ENCODE measurements at regions of chr9 and their contacts with region 1.

Region 1: DNA sequence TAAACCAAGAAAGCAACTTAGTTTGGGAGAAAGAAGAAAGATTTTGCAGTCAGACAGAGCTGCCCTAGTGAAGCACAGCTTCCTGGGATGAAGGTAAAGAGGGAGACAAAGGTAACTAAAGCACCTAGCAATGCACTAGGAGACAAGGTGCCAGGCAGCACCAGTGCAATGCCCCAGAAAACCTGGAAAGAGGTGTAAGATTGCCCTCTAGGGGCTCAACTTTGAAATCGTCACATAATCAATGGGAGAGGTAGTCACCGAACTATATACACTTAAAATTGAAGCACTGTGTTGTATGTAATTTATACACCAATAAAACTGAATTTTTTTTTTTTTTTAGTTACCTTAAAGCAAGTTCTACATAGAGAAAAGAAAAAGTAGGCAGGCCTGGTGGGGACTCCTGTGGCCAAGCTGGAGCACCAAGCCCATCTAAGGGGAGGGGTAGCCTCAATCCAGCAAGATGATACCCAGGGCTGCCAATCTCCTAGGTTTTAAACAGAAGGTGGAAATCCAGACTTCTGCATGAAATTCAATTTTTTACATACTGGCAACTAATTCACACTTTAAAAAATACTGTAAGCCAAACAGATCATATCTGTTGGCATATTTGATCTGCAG is 48.2 kb downstream of the CDK5RAP2 start:
- DNase-seq: peak in 2 of 3 donors; percentile 39 to 50
- H3K4me3 ChIP-seq: no peak overlapping the region
- H3K27ac ChIP-seq: no peak overlapping the region
- H3K4me1 ChIP-seq: no peaks in the 10 kb centered on the region
- H3K27me3 ChIP-seq: no peaks in the 10 kb centered on the region

Region 2: GRCh38 chr9:120542701-120543490 is 11.1 kb after region 1 on chr9:
- CTCF ChIA-PET with region 1: interaction called, 16 read pairs
- POLR2A ChIA-PET with region 1: no interaction called
- DNase-seq: no peak
- H3K4me3 ChIP-seq: no peak overlapping the region
- H3K27ac ChIP-seq: no peak overlapping the region
- H3K4me1 ChIP-seq: no peaks in the 10 kb centered on the region
- H3K27me3 ChIP-seq: no peaks in the 10 kb centered on the region

Region 3: DNA sequence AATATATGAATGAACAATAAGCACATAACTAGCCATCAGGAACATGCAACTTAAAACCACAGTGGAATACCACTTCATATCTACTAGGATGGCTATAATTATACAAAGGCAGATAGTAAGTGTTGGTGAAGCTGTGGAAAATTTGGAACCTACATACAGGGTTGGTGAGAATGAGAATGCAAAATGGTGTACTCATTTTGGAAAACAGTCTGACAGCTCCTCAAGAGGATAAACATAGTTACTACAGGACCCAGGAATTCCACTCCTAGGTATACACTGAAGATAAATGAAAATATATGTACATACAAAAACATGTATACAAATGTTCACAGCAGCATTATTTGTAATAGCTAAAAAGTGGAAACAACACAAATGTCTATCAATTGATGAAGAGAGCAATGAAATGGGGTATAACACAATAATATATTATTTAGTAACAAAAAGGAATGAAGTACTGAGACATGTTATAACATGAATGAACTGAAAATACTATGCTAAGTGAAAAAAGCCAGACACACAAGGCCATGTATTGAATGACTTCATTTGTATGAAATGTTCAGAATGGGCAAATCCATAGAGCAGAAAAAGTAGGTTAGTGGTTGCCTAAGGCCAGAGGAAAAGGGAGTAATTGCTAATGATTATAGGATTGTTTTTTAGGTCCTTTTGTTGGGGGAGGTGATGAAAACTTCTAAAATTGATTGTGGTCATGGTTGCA is 79.3 kb after region 1 on chr9:
- CTCF ChIA-PET with region 1: interaction called, 11 read pairs
- POLR2A ChIA-PET with region 1: no interaction called
- DNase-seq: peak; percentile 21 to 48 (median 34)
- H3K4me3 ChIP-seq: no peak overlapping the region
- H3K27ac ChIP-seq: no peak overlapping the region
- H3K4me1 ChIP-seq: no peaks in the 10 kb centered on the region
- H3K27me3 ChIP-seq: no peaks in the 10 kb centered on the region